H1 (cell line): ENCODE measurements at regions of chr20 and their contacts with region 1.

Region 1: DNA sequence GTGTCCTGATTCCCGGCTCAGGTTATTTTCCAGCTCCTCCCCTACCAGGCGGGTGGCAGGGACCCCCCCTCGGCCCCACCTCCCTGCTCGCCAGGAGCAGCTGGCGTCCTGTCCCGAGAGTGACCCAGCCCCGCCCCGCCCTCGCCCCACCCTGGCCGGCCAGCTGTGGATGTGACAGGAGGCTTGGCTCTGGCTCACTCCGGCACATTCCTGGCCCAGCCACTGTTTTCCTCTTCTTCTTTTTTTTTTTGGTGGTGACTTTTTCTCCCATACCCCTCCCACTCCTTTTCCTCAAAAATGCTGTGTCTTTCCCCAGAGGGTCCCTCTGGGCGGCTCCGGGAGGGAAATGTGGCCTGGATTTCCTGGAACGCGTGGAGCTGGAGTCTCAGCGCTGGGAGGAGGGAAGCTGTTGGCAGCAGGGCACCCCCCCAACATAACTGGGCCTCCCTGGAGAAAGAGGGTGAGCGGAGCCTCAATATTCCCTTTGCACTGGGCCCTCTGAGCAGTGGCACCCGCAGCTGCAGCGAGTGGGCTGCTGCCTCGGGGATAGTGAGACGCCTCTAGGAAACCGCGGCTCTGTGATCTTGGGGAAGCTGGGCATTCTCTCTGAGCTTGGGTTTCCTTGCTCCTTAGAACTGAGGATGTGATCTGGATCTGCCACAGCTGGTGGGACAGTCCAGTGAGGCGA is 28.3 kb upstream of the CSNK2A1 start:
- DNase-seq: peak in 1 of 2 experiments; percentile 63
- H3K4me3 ChIP-seq: 0 out of 8 replicates have a peak overlapping the region, but pooled peaks of 1 of the 4 experiments have one; percentile 13
- H3K27ac ChIP-seq: no peak overlapping the region
- H3K4me1 ChIP-seq: peaks cover 13 to 34% (median 22%) of the 10 kb centered on the region in 4 experiments
- H3K27me3 ChIP-seq: peaks cover 0 to 11% (median 3%) of the 10 kb centered on the region in 4 experiments; a peak in 5 of 7 replicates
- CTCF ChIP-seq: no peak
- EP300 ChIP-seq: no peak
- POLR2A ChIP-seq: no peak
- RAD21 ChIP-seq: no peak

Region 2: DNA sequence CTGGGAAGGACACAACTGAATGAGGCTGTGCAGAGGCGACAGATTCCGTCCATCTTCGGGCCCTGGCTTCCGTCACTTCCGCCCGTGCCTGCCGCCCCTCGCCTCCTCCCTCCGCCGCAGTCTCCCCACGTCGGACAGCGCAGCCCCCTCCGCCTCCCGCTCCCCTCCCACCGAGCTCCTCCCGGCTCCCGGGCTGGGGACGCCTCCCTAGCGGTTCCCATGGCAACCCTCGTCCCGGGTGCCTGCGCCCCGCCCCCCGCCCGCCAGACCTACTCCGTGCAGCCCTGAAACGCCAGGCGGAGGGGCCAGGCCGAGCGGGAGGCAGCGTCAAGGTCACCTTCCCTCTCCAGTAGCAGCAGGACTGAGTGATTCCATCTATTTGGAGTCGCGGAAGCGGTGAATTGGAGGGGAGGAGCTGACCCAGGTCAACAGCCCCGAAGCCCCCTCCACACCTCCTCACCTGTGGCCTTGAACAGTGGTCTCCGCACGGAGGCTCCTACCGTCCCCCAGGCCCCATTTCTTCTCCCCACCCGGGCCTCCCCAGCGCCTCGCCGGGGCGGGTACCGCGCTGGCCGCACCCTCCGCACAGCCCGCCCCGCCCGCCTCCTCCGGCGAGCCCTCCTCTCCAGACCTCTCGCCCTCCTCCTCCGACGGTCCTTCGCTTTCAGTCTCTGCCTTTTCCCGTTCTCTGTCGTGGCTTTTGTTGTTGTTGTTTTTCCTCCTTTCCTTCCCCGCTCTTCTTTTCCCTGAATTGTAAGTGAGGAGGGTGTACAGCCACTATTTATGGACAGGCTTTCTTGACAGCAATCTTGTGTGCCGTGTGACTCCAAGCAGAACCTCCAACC is 224.0 kb before region 1 on chr20:
- CTCF ChIA-PET with region 1: no interaction called
- POLR2A ChIA-PET with region 1: no interaction called
- DNase-seq: peak; percentile 89 to 94
- H3K4me3 ChIP-seq: peak overlapping the region; percentile 63 to 90 (median 66)
- H3K27ac ChIP-seq: peak overlapping the region; percentile 85
- H3K4me1 ChIP-seq: peaks cover 0 to 12% (median 8%) of the 10 kb centered on the region in 4 experiments; a peak in 4 of 7 replicates
- H3K27me3 ChIP-seq: peaks cover 0 to 3% (median 0%) of the 10 kb centered on the region in 4 experiments; a peak in 3 of 7 replicates
- CTCF ChIP-seq: no peak
- EP300 ChIP-seq: peak in 1 of 2 experiments; percentile 65; a peak in 1 of 3 replicates
- POLR2A ChIP-seq: peak; percentile 32 to 76
- RAD21 ChIP-seq: no peak

Region 3: DNA sequence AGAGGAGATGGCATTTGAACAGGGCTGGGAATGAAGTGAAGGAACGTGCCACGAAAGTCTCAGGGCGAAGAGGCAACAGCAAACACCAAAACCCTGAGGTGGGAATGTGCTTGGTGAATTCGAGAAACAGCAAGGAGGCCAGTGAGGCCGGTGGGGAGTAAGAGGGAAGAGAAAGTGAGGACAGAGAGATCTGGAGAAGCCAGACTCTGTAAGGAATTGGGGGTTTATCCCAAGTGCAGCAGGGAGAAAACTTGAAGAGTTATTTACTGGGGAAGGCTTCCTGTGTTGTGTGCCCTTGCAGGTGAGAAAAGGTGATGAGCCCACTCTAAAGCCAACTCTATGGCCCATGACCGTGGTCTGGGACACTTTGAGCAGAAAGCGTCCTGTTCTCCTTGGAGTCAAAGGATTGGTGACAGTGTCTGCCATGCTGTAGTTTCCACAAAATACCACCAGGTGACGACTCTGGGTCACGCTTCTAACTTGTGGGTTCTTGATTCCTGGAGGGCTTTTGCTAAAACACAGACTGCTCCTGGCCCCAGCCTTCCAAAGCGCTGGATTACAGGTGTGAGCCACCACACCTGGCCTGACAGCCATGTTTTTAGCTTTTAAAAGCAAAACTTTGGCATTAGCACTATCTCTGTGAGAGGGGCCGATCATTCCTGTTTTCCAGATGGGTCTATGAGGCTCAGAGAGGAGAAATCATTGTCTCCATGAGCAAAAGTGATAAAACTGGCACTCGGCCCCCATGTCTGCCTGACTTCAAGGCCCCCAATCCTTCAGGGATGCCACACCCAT is 10.3 kb before region 1 on chr20:
- CTCF ChIA-PET with region 1: interaction called, 73 read pairs
- POLR2A ChIA-PET with region 1: interaction called, 18 read pairs
- DNase-seq: peak in 1 of 2 experiments; percentile 83
- H3K4me3 ChIP-seq: no peak overlapping the region
- H3K27ac ChIP-seq: no peak overlapping the region
- H3K4me1 ChIP-seq: no peaks in the 10 kb centered on the region
- H3K27me3 ChIP-seq: no peaks in the 10 kb centered on the region
- CTCF ChIP-seq: peak; percentile 74 to 99 (median 95)
- EP300 ChIP-seq: no peak
- POLR2A ChIP-seq: no peak
- RAD21 ChIP-seq: peak; percentile 98